ENCODE measurements at regions of chr10 and their contacts with region 1.

Region 1: DNA sequence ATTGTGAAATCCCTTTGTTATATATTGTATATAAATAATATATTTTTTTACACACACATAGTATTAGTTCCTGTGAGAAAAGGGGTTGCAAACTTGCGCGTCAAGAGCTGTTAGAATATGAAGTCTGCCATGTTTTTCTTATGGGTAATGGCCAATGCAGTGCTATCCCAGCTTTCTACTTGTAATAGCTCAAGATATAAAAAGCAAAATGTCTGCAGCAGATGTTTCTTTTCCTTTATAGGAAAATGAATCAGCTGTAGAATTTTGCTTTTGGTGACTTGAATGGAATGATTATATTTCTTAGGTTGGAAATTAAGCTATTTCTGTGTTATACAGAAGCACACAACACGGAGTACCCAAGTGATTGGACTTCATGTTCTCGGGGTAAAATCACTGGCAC is 53.3 kb upstream of the TMEM236 start:
- DNase-seq: no peak
- H3K4me3 ChIP-seq: no peak overlapping the region
- H3K27ac ChIP-seq: no peak overlapping the region
- H3K4me1 ChIP-seq: no peaks in the 10 kb centered on the region
- H3K27me3 ChIP-seq: no peaks in the 10 kb centered on the region
- CTCF ChIP-seq: no peak
- POLR2A ChIP-seq: no peak

Region 2: GRCh38 chr10:17687117-17687831 is 11.4 kb before region 1 on chr10:
- CTCF ChIA-PET with region 1: interaction called, 11 read pairs
- POLR2A ChIA-PET with region 1: no interaction called
- dilution Hi-C with region 1: no loop called
- intact Hi-C with region 1: no loop called
- DNase-seq: no peak
- H3K4me3 ChIP-seq: no peak overlapping the region
- H3K27ac ChIP-seq: no peak overlapping the region
- H3K4me1 ChIP-seq: peaks cover 2% of the 10 kb centered on the region
- H3K27me3 ChIP-seq: no peaks in the 10 kb centered on the region
- CTCF ChIP-seq: no peak
- POLR2A ChIP-seq: no peak

Region 3: GRCh38 chr10:17756557-17757217 is 58.0 kb after region 1 on chr10:
- CTCF ChIA-PET with region 1: no interaction called
- POLR2A ChIA-PET with region 1: no interaction called
- dilution Hi-C with region 1: no loop called
- intact Hi-C with region 1: no loop called
- DNase-seq: no peak
- H3K4me3 ChIP-seq: no peak overlapping the region
- H3K27ac ChIP-seq: no peak overlapping the region
- H3K4me1 ChIP-seq: peaks cover 3% of the 10 kb centered on the region
- H3K27me3 ChIP-seq: no peaks in the 10 kb centered on the region
- CTCF ChIP-seq: no peak
- POLR2A ChIP-seq: no peak

Measured in endothelial cell of umbilical vein (primary cell).